K562 (cell line): ENCODE measurements at regions of chr11 and their contacts with region 1.

Region 1: DNA sequence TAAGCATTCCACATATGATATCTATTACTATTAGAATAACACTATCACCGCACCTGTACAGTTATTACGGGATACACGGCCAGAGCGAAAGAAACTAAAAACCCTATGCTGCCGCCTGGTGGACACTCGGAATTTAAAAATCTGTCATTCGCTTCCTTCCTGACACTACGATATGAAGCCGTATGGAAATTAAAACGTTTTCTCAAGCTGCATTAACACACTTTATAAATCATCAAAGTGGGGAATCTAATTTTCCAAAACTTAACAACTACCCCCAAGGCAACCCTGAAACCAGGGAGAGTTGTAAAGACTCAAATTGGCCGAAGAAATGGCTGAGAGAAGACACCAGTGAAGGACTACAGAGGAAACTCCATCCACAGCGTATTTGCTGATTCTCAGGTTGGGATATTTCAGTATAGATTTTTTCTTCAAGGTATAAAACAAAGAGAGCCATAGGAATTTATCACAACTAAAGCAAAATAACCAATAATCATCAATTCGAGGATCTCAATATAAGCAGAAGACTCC is 1.4 kb downstream of the CCDC73 start:
- DNase-seq: peak; percentile 39 to 69 (median 44)
- ATAC-seq: peak; percentile 94
- H3K4me3 ChIP-seq: no peak overlapping the region
- H3K27ac ChIP-seq: no peak overlapping the region
- H3K4me1 ChIP-seq: no peaks in the 10 kb centered on the region; a peak in 1 of 5 replicates
- H3K27me3 ChIP-seq: peaks cover 10 to 26% of the 10 kb centered on the region in 2 experiments
- CTCF ChIP-seq: peak; percentile 71 to 83 (median 76); a peak in 5 of 6 replicates
- EP300 ChIP-seq: no peak
- POLR2A ChIP-seq: no peak
- RAD21 ChIP-seq: peak; percentile 82 to 84

Region 2: DNA sequence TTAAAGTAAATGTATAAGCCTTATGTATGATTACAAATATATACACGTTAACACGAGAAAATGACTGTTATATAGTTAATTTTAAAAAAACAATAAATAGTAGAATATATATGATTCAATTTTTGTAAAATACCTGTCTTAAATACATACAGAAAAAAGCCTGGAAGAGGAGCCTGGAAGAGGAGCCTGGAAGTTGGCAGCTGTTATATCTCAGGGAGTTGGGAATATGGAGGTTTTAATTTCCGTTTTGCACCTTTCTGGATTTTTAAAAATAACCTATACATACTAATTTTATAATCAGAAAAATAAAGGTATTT is 469.2 kb before region 1 on chr11:
- CTCF ChIA-PET with region 1: interaction called, 17 read pairs
- POLR2A ChIA-PET with region 1: no interaction called
- in situ Hi-C with region 1: loop called (anchors 5 kb)
- intact Hi-C with region 1: loop called (anchors 2 kb)
- DNase-seq: no peak
- ATAC-seq: no peak
- H3K4me3 ChIP-seq: no peak overlapping the region
- H3K27ac ChIP-seq: no peak overlapping the region
- H3K4me1 ChIP-seq: no peaks in the 10 kb centered on the region
- H3K27me3 ChIP-seq: peaks cover 7 to 11% of the 10 kb centered on the region in 2 experiments; a peak in 3 of 5 replicates
- CTCF ChIP-seq: no peak
- EP300 ChIP-seq: no peak
- POLR2A ChIP-seq: no peak
- RAD21 ChIP-seq: no peak

Region 3: GRCh38 chr11:32374261-32374711 is 418.7 kb before region 1 on chr11:
- CTCF ChIA-PET with region 1: interaction called, 7 read pairs
- POLR2A ChIA-PET with region 1: no interaction called
- in situ Hi-C with region 1: loop called (anchors 5 kb)
- intact Hi-C with region 1: loop called (anchors 2 kb)
- DNase-seq: peak; percentile 75 to 89 (median 76)
- ATAC-seq: peak; percentile 97
- H3K4me3 ChIP-seq: no peak overlapping the region
- H3K27ac ChIP-seq: no peak overlapping the region
- H3K4me1 ChIP-seq: peaks cover 0 to 4% of the 10 kb centered on the region in 2 experiments; a peak in 2 of 5 replicates
- H3K27me3 ChIP-seq: no peaks in the 10 kb centered on the region
- CTCF ChIP-seq: peak; percentile 87 to 92 (median 89)
- EP300 ChIP-seq: peak; percentile 27; the same call in 1 of the 2 replicates
- POLR2A ChIP-seq: no peak
- RAD21 ChIP-seq: peak; percentile 73 to 91

Region 4: GRCh38 chr11:32396331-32396730 is 396.7 kb before region 1 on chr11:
- CTCF ChIA-PET with region 1: no interaction called
- POLR2A ChIA-PET with region 1: no interaction called
- in situ Hi-C with region 1: no loop called
- intact Hi-C with region 1: no loop called
- DNase-seq: no peak
- ATAC-seq: no peak
- H3K4me3 ChIP-seq: no peak overlapping the region
- H3K27ac ChIP-seq: no peak overlapping the region
- H3K4me1 ChIP-seq: no peaks in the 10 kb centered on the region
- H3K27me3 ChIP-seq: no peaks in the 10 kb centered on the region
- CTCF ChIP-seq: no peak
- EP300 ChIP-seq: no peak
- POLR2A ChIP-seq: no peak
- RAD21 ChIP-seq: no peak

Region 5: DNA sequence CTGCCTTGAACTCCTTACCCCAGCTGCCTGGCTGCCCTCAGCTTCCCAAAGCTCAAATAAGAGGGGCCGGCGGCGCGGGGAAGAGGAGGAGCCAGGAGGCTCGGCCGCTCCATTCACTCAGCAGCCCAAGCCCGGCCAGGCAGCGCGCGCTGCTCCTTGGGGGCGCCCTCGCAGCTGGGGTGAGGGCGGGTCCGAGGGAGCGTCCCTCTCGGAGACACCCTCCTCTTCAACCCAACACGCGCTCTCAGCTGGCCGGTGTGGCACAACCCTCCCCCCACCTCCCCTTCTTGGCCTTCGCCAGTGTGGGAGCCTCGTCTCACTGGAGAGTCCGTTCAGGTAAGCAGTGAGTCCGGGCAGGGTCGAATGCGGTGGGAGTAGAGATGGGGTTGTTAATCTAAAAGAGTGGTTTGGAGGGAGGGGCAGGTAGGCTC is 357.5 kb before region 1 on chr11 and contains the start of gene WT1:
- CTCF ChIA-PET with region 1: interaction called, 4 read pairs
- POLR2A ChIA-PET with region 1: no interaction called
- in situ Hi-C with region 1: no loop called
- intact Hi-C with region 1: loop called (anchors 5 kb)
- DNase-seq: peak; percentile 84 to 90 (median 85)
- ATAC-seq: peak; percentile 83
- H3K4me3 ChIP-seq: peak within 1 kb of the TSS; percentile 76
- H3K27ac ChIP-seq: peak within 1 kb of the TSS; percentile 92
- H3K4me1 ChIP-seq: peaks cover 14 to 47% of the 10 kb centered on the region in 2 experiments; a peak in 4 of 5 replicates
- H3K27me3 ChIP-seq: no peaks in the 10 kb centered on the region
- CTCF ChIP-seq: no peak; a peak in 1 of 6 replicates
- EP300 ChIP-seq: 0 out of 2 replicates have a peak, but pooled peaks have one; percentile 15
- POLR2A ChIP-seq: peak; percentile 71
- RAD21 ChIP-seq: no peak; a peak in 2 of 4 replicates
- polyA plus RNA-seq, gene WT1: 7.1 to 7.7 TPM

Region 6: DNA sequence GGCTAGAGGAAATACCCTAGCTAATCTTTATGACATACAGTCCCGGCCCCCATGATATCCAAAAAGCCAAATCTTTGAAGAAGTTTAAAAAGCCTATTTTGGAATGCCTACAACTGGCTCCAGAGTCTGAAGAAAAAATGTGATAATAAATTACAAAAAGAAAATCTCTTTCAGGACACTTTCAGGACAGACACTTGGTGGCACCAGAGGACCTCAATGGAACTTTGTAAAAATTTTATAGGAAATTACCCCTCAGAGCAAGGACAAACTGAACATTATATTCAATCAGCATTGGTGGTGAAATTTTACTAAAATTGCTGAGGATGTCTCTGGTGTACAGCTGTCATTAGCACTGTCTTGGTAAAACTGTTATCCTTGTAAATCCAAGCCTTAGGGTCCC is 79.5 kb before region 1 on chr11:
- CTCF ChIA-PET with region 1: interaction called, 14 read pairs
- POLR2A ChIA-PET with region 1: no interaction called
- in situ Hi-C with region 1: no loop called
- intact Hi-C with region 1: loop called (anchors 1 kb)
- DNase-seq: no peak
- ATAC-seq: 0 out of 3 replicates have a peak, but pooled peaks have one; percentile 41
- H3K4me3 ChIP-seq: no peak overlapping the region
- H3K27ac ChIP-seq: no peak overlapping the region
- H3K4me1 ChIP-seq: no peaks in the 10 kb centered on the region
- H3K27me3 ChIP-seq: no peaks in the 10 kb centered on the region
- CTCF ChIP-seq: peak; percentile 34 to 61 (median 40); a peak in 4 of 6 replicates
- EP300 ChIP-seq: no peak
- POLR2A ChIP-seq: no peak
- RAD21 ChIP-seq: peak; percentile 38 to 61

Region 7: GRCh38 chr11:32751381-32751780 is 41.6 kb before region 1 on chr11:
- CTCF ChIA-PET with region 1: no interaction called
- POLR2A ChIA-PET with region 1: no interaction called
- in situ Hi-C with region 1: no loop called
- intact Hi-C with region 1: loop called (anchors 5 kb)
- DNase-seq: no peak
- ATAC-seq: peak; percentile 71
- H3K4me3 ChIP-seq: no peak overlapping the region
- H3K27ac ChIP-seq: no peak overlapping the region
- H3K4me1 ChIP-seq: no peaks in the 10 kb centered on the region
- H3K27me3 ChIP-seq: peaks cover 0 to 6% of the 10 kb centered on the region in 2 experiments; a peak in 1 of 5 replicates
- CTCF ChIP-seq: 0 out of 6 replicates have a peak, but pooled peaks of 1 of the 3 experiments have one; percentile 13
- EP300 ChIP-seq: no peak
- POLR2A ChIP-seq: no peak
- RAD21 ChIP-seq: no peak

Region 8: DNA sequence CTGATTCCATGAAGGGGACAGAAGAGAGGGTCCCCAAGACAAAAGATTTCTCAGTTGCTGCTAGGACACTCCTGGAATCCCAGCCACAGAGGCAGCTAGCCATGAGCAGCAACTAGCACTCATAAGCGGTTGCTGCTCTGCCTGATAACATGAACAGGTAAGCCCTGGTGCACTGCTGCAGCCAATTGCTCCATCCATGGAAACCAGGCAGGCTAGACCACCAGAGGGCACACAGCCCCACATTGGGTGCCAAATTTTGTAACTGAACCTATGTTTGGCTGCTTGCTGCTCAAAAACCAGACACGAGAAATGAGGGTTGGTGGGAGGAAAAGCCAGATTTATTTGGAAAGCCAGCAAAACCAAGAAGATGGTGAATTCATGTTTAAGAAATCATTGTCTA is 77.7 kb after region 1 on chr11:
- CTCF ChIA-PET with region 1: no interaction called
- POLR2A ChIA-PET with region 1: no interaction called
- in situ Hi-C with region 1: no loop called
- intact Hi-C with region 1: no loop called
- DNase-seq: peak; percentile 12 to 40 (median 18)
- ATAC-seq: peak; percentile 85
- H3K4me3 ChIP-seq: no peak overlapping the region
- H3K27ac ChIP-seq: no peak overlapping the region
- H3K4me1 ChIP-seq: no peaks in the 10 kb centered on the region
- H3K27me3 ChIP-seq: peaks cover 7 to 10% of the 10 kb centered on the region in 2 experiments; a peak in 3 of 5 replicates
- CTCF ChIP-seq: peak; percentile 49 to 51 (median 50)
- EP300 ChIP-seq: no peak
- POLR2A ChIP-seq: no peak
- RAD21 ChIP-seq: peak in 1 of 2 experiments; percentile 32; a peak in 1 of 4 replicates